Activated naive CD4-positive, alpha-beta T cell treated with anti-CD3 and anti-CD28 coated beads for 36 hours (primary cell): ENCODE measurements at regions of chr16 and their contacts with region 1.

Region 1: DNA sequence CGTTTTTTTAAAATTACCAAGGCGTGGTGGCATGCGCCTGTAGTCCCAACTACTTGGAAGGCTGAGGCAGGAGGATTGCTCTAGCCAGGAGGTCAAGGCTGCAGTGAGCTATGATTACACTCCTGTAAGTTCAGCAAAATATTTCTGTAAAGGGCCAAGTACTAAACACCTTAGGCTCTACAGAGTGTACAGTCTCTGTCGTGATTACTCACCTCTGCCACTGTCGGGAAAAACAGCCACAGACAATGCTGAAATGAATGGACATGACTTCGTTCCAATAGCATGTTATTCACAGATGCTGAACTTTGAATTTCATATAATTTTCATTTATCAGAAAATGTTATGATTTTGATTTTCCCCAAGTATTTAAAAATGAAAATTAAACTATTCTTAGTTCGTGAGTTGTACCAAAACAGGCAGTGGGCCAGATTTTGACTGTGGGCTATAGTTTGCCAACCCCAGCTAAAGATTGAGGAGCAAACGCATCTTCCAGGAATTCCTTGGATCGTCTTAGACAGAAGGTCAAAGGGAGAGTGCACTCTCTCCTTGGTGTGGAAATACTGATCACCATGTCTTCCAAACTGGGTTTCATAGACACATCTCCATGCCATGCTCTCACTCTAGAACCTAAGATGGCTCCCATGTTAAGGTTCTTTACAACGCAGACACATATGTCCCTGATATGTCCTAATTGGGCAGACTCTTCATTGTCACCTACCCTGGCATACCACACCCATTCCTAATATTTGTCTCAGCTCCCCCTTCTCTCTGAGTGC is 89.5 kb downstream of the MARF1 start:
- DNase-seq: peak; percentile 65
- H3K4me3 Mint-ChIP-seq: no peak overlapping the region
- H3K27ac Mint-ChIP-seq: peak overlapping the region; percentile 7
- H3K4me1 Mint-ChIP-seq: peaks cover 26% of the 10 kb centered on the region
- H3K27me3 Mint-ChIP-seq: no peaks in the 10 kb centered on the region

Region 2: DNA sequence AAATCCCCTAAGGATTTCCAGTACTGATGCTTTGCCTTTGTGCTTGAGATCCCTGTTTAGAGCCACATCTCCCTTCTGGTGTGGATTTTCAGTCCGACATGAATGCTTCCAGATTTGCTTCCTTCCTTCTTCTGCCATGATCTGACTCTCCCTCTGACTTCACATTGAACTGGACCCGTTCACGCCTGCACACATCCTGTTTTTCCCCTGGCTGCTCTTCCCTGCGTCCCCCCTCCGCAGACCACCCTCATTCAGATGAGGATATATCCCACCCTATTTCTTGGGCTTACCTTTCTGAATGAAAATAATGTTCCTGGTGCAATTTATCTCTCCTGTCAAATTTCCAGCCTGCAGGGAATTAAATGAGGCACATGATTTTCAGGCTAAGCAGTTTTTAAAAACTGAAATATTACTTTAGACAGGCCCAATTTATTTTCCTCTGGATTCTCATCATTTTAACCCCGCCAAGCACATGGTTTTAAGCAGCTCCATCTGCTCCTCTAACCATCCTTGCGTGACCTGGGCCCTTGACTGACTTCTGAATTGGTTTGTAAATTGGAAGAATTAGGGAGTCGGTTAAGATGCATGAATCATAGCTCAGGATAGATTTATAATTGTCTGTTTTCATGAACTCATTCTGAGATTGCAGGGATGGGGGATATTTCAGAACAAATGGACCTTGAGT is 59.9 kb before region 1 on chr16:
- CTCF ChIA-PET with region 1: interaction called, 3 read pairs
- intact Hi-C with region 1: loop called (anchors 10 kb)
- DNase-seq: no peak
- H3K4me3 Mint-ChIP-seq: no peak overlapping the region
- H3K27ac Mint-ChIP-seq: peak overlapping the region; percentile 79
- H3K4me1 Mint-ChIP-seq: peaks cover 48% of the 10 kb centered on the region
- H3K27me3 Mint-ChIP-seq: no peaks in the 10 kb centered on the region

Region 3: GRCh38 chr16:15618392-15618791 is 64.9 kb after region 1 on chr16:
- CTCF ChIA-PET with region 1: no interaction called
- intact Hi-C with region 1: no loop called
- DNase-seq: no peak
- H3K4me3 Mint-ChIP-seq: no peak overlapping the region
- H3K27ac Mint-ChIP-seq: no peak overlapping the region
- H3K4me1 Mint-ChIP-seq: no peaks in the 10 kb centered on the region
- H3K27me3 Mint-ChIP-seq: no peaks in the 10 kb centered on the region